ENCODE measurements at regions of chr2 and their contacts with region 1.

Region 1: GRCh38 chr2:111705711-111706336 is 178.2 kb downstream of the ANAPC1 start:
- DNase-seq: peak; percentile 78
- ATAC-seq: peak; percentile 90
- H3K4me3 Mint-ChIP-seq: no peak overlapping the region
- H3K27ac Mint-ChIP-seq: peak overlapping the region; percentile 58
- H3K4me1 Mint-ChIP-seq: peaks cover 39% of the 10 kb centered on the region
- H3K27me3 Mint-ChIP-seq: peaks cover 26% of the 10 kb centered on the region

Region 2: GRCh38 chr2:110818767-110819481 is 886.9 kb before region 1 on chr2:
- CTCF ChIA-PET with region 1: no interaction called
- POLR2A ChIA-PET with region 1: no interaction called
- intact Hi-C with region 1: loop called in 1 of 2 experiments (anchors 10 kb)
- DNase-seq: no peak
- ATAC-seq: no peak
- H3K4me3 Mint-ChIP-seq: no peak overlapping the region
- H3K27ac Mint-ChIP-seq: no peak overlapping the region
- H3K4me1 Mint-ChIP-seq: peaks cover 6% of the 10 kb centered on the region
- H3K27me3 Mint-ChIP-seq: peaks cover 40% of the 10 kb centered on the region

Region 3: GRCh38 chr2:111100765-111101162 is 605.1 kb before region 1 on chr2:
- CTCF ChIA-PET with region 1: no interaction called
- POLR2A ChIA-PET with region 1: no interaction called
- intact Hi-C with region 1: loop called in 1 of 2 experiments (anchors 5 kb)
- DNase-seq: peak; percentile 44
- ATAC-seq: peak; percentile 92
- H3K4me3 Mint-ChIP-seq: no peak overlapping the region
- H3K27ac Mint-ChIP-seq: no peak overlapping the region
- H3K4me1 Mint-ChIP-seq: peaks cover 22% of the 10 kb centered on the region
- H3K27me3 Mint-ChIP-seq: peaks cover 51% of the 10 kb centered on the region

Region 4: DNA sequence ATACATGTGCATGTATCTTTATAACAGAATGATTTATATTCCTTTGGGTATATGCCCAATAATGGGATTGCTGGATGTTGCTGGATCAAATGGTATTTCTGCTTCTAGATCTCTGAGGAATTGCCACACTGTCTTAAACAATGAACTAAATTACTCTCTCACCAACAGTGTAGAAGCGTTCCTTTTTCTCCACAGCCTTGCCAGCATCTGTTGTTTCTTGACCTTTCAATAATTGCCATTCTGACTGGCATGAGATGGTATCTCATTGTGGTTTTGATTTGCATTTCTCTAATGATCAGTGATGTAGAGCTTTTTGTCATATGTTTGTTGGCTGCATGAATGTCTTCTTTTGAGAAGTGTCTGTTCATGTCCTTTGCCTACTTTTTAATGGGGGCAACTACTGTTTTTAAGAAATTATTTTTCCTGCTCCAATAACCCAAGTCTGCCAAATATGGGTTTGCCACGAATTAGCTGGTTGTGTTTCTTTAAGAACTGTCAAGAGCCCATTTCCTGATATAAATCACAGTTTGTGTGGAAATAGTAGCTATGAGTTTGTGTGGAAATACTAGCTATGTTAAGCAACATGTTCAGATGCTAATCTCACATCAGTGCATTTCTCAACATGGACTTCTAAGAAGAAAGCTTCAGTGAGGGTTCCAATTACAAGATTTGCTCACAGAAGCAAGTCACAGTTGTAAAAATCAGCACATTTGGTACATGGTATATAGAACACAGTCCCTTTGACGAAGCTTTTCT is 81.2 kb before region 1 on chr2:
- CTCF ChIA-PET with region 1: no interaction called
- POLR2A ChIA-PET with region 1: no interaction called
- intact Hi-C with region 1: loop called in 1 of 2 experiments (anchors 5 kb)
- DNase-seq: no peak
- ATAC-seq: no peak
- H3K4me3 Mint-ChIP-seq: no peak overlapping the region
- H3K27ac Mint-ChIP-seq: no peak overlapping the region
- H3K4me1 Mint-ChIP-seq: peaks cover 23% of the 10 kb centered on the region
- H3K27me3 Mint-ChIP-seq: peaks cover 5% of the 10 kb centered on the region

Region 5: GRCh38 chr2:112481050-112481527 is 775.3 kb after region 1 on chr2:
- CTCF ChIA-PET with region 1: no interaction called
- POLR2A ChIA-PET with region 1: no interaction called
- intact Hi-C with region 1: no loop called
- DNase-seq: peak; percentile 93
- ATAC-seq: peak; percentile 88
- H3K4me3 Mint-ChIP-seq: peak overlapping the region; percentile 81
- H3K27ac Mint-ChIP-seq: peak overlapping the region; percentile 85
- H3K4me1 Mint-ChIP-seq: peaks cover 32% of the 10 kb centered on the region
- H3K27me3 Mint-ChIP-seq: no peaks in the 10 kb centered on the region